Vagina (tissue), 2 donors: ENCODE measurements at regions of chr2 and their contacts with region 1.

Region 1: GRCh38 chr2:38301340-38301968 is 75.6 kb downstream of the ATL2 start:
- DNase-seq: no peak
- H3K4me3 ChIP-seq: no peak overlapping the region
- H3K27ac ChIP-seq: no peak overlapping the region
- H3K4me1 ChIP-seq: no peaks in the 10 kb centered on the region
- H3K27me3 ChIP-seq: no peaks in the 10 kb centered on the region
- CTCF ChIP-seq: no peak
- POLR2A ChIP-seq: no peak

Region 2: GRCh38 chr2:38720613-38721241 is 419.3 kb after region 1 on chr2:
- intact Hi-C with region 1: loop called (anchors 10 kb)
- DNase-seq: peak in 1 of 2 donors; percentile 91
- H3K4me3 ChIP-seq: no peak overlapping the region
- H3K27ac ChIP-seq: no peak overlapping the region
- H3K4me1 ChIP-seq: peaks cover 32% of the 10 kb centered on the region
- H3K27me3 ChIP-seq: no peaks in the 10 kb centered on the region
- CTCF ChIP-seq: no peak
- POLR2A ChIP-seq: no peak